Mammary epithelial cell (primary cell): ENCODE measurements at regions of chr9 and their contacts with region 1.

Region 1: DNA sequence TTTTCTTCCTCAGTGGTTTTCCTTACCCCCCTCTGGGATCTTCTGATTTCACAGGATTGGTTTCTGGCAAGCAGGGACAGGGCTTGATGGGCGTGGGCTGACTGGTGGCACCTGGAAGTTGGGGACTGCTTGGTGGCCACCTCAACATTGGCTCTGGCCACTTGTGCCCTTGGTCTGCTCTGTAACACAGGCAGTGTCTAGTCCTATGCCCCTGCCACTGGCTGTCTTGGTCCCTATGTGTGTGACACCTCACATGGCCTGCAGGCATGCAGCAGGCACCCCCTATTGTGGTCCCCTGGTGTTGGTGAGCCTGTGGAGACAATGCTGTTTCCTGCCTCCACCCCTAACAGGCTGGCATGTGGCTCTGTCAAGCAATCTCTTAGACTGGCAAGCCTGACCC is 71.3 kb downstream of the GDA start:
- DNase-seq: no peak
- H3K4me3 ChIP-seq: no peak overlapping the region
- H3K27ac ChIP-seq: no peak overlapping the region
- H3K4me1 ChIP-seq: no peaks in the 10 kb centered on the region
- H3K27me3 ChIP-seq: peaks cover 3% of the 10 kb centered on the region
- CTCF ChIP-seq: no peak

Region 2: DNA sequence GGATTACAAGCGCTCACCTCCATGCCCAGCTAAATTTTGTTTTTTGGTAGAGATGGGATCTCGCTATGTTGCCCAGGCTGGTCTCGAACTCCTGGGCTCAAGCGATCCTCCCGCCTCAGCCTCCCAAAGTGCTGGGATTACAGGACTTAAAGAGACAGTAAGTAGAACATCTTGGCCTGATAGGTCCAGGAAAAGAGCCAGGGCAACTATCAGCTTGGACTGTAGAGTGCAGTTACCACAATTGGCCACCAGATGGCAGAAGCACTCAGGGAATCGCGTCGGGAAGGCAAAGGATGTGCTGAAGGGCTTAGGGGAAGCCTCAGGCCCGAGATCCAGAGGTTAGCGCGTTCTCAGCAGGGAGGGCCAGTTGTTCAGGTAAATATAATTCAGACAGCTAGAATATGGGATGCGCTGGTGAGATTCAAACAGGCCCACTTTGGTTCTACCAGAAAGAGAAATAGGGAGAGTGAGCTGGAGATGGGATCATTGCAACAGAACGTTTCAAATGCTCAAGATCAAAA is 181.6 kb before region 1 on chr9:
- CTCF ChIA-PET with region 1: no interaction called
- dilution Hi-C with region 1: no loop called
- in situ Hi-C with region 1: no loop called
- intact Hi-C with region 1: no loop called
- DNase-seq: peak; percentile 71
- H3K4me3 ChIP-seq: no peak overlapping the region
- H3K27ac ChIP-seq: no peak overlapping the region
- H3K4me1 ChIP-seq: no peaks in the 10 kb centered on the region
- H3K27me3 ChIP-seq: no peaks in the 10 kb centered on the region
- CTCF ChIP-seq: peak; percentile 96

Region 3: GRCh38 chr9:72119853-72120252 is 100.7 kb before region 1 on chr9:
- CTCF ChIA-PET with region 1: no interaction called
- dilution Hi-C with region 1: loop called (anchors 5 kb)
- in situ Hi-C with region 1: no loop called
- intact Hi-C with region 1: no loop called
- DNase-seq: no peak
- H3K4me3 ChIP-seq: no peak overlapping the region
- H3K27ac ChIP-seq: no peak overlapping the region
- H3K4me1 ChIP-seq: no peaks in the 10 kb centered on the region
- H3K27me3 ChIP-seq: no peaks in the 10 kb centered on the region
- CTCF ChIP-seq: no peak